Activated CD8-positive, alpha-beta T cell treated with anti-CD3 and anti-CD28 coated beads, Interleukin-2, amount 10 ng/mL, durations not matched to agents 7 days and 5 days (primary cell): ENCODE measurements at regions of chr12 and their contacts with region 1.

Region 1: DNA sequence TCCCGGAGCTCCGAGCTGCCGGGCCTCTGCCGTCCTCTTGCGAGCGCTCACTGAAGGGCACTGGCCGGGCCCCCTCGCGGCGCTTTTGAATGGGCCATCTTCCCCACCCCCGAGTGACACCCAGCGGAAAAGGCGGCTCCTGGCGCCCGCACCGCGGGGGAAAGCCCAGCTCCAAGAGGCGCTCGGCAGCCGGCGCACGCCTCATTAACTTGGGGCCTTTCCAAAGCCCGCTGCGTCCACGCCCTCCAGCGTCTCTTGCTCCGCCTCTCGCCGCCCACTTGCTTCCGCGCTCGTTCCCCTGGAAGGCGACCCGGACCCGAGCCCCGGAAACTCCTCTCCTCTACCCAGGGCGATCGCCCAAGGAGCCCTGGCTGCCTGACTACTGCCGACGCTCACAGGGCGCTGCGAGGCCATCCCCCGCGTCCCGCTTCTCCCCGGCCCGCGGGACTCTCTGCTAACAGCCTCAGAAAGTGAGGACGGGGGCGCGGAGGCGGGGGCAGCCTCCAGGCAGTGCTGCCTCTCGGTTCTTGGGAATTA is at the start of gene PHLDA1:
- DNase-seq: peak; percentile 93
- ATAC-seq: peak; percentile 86
- H3K4me3 Mint-ChIP-seq: peak within 1 kb of the TSS; percentile 90
- H3K27ac Mint-ChIP-seq: peak within 1 kb of the TSS; percentile 93
- H3K4me1 Mint-ChIP-seq: peaks cover 49% of the 10 kb centered on the region
- H3K27me3 Mint-ChIP-seq: peaks cover 11% of the 10 kb centered on the region
- total RNA-seq, gene PHLDA1: 5.6 to 6.1 TPM

Region 2: DNA sequence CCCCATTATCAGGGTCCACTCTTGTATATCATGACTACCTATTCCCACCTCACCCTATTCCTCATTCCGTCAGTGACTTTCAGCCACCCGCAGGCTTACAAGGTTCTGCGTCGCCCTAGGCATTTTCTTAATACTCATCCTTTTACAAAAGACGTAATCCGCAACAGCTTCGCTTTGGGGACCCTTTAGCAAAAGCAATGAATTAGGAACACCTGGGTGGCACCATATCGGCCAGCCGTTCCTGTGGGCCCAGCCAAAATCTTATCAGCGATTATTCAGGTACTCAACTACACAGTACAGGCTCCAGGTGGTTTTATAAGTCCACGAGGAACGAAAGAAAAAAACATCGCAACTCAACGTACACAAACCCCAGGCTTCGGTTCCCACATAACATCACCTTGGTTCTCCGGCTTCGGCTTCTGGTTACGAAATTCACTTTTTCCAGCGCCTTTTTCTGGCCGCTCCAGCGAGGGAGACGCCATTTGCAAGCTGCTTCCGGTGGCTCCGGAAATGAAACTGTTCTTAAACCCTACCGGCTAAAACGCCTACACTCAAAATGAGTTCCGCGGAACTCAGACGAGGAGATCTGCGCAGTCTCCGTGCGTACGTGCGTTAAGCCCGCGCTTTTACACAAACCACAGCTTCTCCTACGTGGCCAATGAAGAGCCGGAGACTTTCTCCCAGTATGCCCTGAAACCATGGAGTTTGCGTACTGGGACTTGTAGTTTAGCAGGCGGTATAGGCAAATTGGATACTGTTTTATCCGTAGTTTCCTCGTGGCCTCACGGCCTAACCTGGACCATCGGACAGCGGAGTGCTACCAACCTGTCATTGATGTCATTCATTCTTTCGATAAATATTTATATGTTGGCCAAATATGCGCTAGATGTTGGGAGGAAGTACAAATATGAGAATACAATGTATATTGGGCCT is 520.2 kb before region 1 on chr12 and contains the start of gene KRR1:
- CTCF ChIA-PET with region 1: interaction called, 7 read pairs
- POLR2A ChIA-PET with region 1: interaction called, 15 read pairs
- DNase-seq: peak; percentile 96
- ATAC-seq: peak; percentile 97
- H3K4me3 Mint-ChIP-seq: peak within 1 kb of the TSS; percentile 97
- H3K27ac Mint-ChIP-seq: peak within 1 kb of the TSS; percentile 99
- H3K4me1 Mint-ChIP-seq: peaks cover 32% of the 10 kb centered on the region
- H3K27me3 Mint-ChIP-seq: no peaks in the 10 kb centered on the region
- total RNA-seq, gene KRR1: 71.0 to 73.1 TPM

Region 3: GRCh38 chr12:75641031-75641780 is 390.4 kb before region 1 on chr12:
- CTCF ChIA-PET with region 1: interaction called, 18 read pairs
- POLR2A ChIA-PET with region 1: interaction called, 7 read pairs
- DNase-seq: peak; percentile 67
- ATAC-seq: peak; percentile 95
- H3K4me3 Mint-ChIP-seq: no peak overlapping the region
- H3K27ac Mint-ChIP-seq: peak overlapping the region; percentile 54
- H3K4me1 Mint-ChIP-seq: peaks cover 44% of the 10 kb centered on the region
- H3K27me3 Mint-ChIP-seq: peaks cover 7% of the 10 kb centered on the region

Region 4: DNA sequence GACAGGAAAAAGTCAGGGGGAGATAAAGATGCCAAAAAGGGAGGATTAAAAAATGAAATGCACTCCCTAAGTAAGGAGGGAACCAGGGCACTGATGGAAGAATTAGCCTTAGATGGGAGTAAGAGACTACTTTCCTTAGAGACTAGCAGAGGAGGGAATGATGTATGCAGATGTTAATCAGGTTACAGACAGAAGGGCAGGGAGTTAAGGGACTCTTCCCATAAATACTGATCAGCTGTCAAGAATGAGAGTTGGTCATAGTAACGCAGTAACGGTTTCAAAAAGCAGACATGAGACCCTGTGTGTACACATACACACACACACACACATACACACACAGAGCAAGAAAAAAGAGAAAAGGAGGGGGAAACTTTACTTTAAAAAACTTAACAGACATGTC is 93.4 kb before region 1 on chr12:
- CTCF ChIA-PET with region 1: interaction called, 13 read pairs
- POLR2A ChIA-PET with region 1: interaction called, 17 read pairs
- DNase-seq: no peak
- ATAC-seq: no peak
- H3K4me3 Mint-ChIP-seq: no peak overlapping the region
- H3K27ac Mint-ChIP-seq: no peak overlapping the region
- H3K4me1 Mint-ChIP-seq: peaks cover 15% of the 10 kb centered on the region
- H3K27me3 Mint-ChIP-seq: no peaks in the 10 kb centered on the region

Region 5: DNA sequence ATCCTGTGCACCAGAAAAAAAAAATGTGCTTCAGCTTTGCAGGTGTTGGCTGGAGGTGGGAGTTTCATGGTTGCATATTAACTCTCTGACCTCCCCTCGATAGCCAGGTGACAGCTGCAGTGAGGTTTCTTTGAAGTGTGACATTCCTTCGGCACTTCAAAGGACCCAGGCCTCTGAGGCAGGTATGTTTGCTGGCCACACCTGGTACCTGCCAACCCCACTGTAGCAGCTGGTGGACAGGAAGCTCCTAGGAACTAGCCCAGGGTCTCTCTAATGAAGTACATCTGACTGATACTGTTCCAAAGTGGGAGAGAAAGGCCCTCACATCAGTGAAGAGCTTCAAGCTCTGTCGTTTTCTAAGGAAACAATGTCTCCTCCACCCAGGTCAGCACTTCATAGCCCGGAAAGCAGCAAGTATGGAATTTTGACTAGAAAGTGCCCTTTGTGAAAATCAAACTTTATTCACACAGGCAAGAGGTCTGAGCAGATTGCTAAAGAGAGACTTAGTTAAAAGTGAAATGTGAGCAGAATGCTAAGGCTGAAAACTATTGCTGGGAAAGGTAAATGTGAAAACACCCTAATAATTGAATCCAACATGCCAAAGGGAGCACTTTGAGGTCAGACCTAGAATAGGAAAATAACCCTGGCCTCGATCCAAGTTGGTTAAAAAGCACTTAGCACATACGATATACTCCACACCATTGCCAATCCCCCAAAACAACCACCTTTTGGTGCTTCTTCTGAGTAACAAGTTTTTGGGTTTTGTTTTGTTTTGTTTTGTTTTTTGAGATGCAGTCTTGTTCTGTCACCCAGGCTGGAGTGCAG is 71.3 kb before region 1 on chr12:
- CTCF ChIA-PET with region 1: interaction called, 4 read pairs
- POLR2A ChIA-PET with region 1: interaction called, 13 read pairs
- DNase-seq: no peak
- ATAC-seq: peak; percentile 17
- H3K4me3 Mint-ChIP-seq: no peak overlapping the region
- H3K27ac Mint-ChIP-seq: no peak overlapping the region
- H3K4me1 Mint-ChIP-seq: peaks cover 36% of the 10 kb centered on the region
- H3K27me3 Mint-ChIP-seq: no peaks in the 10 kb centered on the region

Region 6: GRCh38 chr12:76020731-76021672 is 10.6 kb before region 1 on chr12:
- CTCF ChIA-PET with region 1: interaction called, 52 read pairs
- POLR2A ChIA-PET with region 1: interaction called, 114 read pairs
- DNase-seq: peak; percentile 85
- ATAC-seq: peak; percentile 84
- H3K4me3 Mint-ChIP-seq: peak overlapping the region; percentile 52
- H3K27ac Mint-ChIP-seq: peak overlapping the region; percentile 96
- H3K4me1 Mint-ChIP-seq: peaks cover 49% of the 10 kb centered on the region
- H3K27me3 Mint-ChIP-seq: no peaks in the 10 kb centered on the region